Activated CD8-positive, alpha-beta T cell treated with anti-CD3 and anti-CD28 coated beads, Interleukin-2, amount 10 ng/mL, durations not matched to agents 7 days and 5 days (primary cell): ENCODE measurements at regions of chr2 and their contacts with region 1.

Region 1: GRCh38 chr2:69914170-69914960 is 544 bp upstream of the MXD1 start:
- DNase-seq: peak; percentile 100
- ATAC-seq: peak; percentile 93
- H3K4me3 Mint-ChIP-seq: peak overlapping the region; percentile 84
- H3K27ac Mint-ChIP-seq: peak overlapping the region; percentile 87
- H3K4me1 Mint-ChIP-seq: peaks cover 42% of the 10 kb centered on the region
- H3K27me3 Mint-ChIP-seq: no peaks in the 10 kb centered on the region

Region 2: GRCh38 chr2:69946351-69947077 is 32.1 kb after region 1 on chr2:
- CTCF ChIA-PET with region 1: interaction called, 5 read pairs
- POLR2A ChIA-PET with region 1: interaction called, 28 read pairs
- DNase-seq: peak; percentile 82
- ATAC-seq: peak; percentile 89
- H3K4me3 Mint-ChIP-seq: peak overlapping the region; percentile 9
- H3K27ac Mint-ChIP-seq: peak overlapping the region; percentile 87
- H3K4me1 Mint-ChIP-seq: peaks cover 30% of the 10 kb centered on the region
- H3K27me3 Mint-ChIP-seq: peaks cover 2% of the 10 kb centered on the region

Region 3: DNA sequence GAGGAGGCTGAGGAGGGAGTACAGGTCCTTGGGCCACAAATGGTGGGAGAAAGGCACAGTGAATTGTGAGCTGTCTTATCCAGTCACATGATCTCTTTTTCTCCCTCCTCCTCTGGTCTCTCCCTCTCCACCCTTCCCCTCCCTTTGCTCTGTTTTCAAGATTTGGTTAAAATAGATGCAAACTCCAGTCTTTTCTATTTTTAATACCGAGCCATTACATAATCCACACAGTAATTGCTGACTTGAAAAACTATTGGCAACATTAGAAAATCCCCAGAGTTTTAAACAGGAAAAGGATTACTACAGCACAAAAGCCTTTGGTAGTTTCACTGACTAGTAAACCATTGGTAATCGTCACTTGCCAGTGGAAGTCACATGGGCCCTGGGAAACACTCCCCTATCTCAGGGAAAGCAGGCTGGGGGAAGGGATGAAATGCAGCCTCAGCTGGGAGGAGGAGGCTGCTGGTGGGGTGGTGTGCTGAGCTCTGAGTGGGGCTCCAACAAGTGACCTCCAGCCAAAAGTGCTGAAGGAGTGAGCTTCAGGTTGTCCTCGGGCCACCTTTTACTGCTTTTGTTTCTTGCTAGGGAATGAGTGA is 115.5 kb after region 1 on chr2:
- CTCF ChIA-PET with region 1: no interaction called
- POLR2A ChIA-PET with region 1: no interaction called
- DNase-seq: no peak
- ATAC-seq: no peak
- H3K4me3 Mint-ChIP-seq: no peak overlapping the region
- H3K27ac Mint-ChIP-seq: peak overlapping the region; percentile 35
- H3K4me1 Mint-ChIP-seq: peaks cover 26% of the 10 kb centered on the region
- H3K27me3 Mint-ChIP-seq: no peaks in the 10 kb centered on the region

Region 4: DNA sequence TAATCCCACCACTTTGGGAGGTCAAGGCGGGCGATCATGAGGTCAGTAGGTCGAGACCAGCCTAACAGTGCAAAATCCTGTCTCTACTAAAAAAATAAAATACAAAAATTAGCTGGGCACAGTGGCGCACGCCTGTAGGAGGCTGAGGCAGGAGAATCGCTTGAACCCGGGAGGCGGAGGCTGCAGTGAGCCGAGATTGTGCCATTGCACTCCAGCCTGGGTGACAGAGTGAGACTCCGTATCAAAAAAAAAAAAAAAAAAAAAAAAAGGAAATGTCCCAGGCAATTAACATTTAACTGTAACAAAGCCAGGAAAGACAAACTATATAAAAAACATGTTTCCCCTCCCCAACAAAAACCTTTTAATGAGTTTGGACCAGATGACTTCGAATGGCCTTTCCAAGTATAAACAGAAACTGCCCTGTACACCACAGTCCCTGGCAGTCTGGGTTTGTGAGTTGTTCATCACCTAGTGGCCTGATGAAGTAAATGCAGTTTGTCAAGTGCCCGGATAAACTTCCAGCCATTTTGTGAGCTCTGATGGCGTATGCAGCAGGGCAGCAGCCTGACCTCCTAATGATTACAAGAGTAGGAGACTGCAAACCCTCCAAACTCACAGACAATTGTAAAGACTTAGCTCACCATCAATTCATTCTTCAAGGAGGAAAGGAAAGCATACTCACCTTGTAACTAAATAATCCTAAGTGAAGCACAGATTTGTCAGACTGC is 156.3 kb after region 1 on chr2:
- CTCF ChIA-PET with region 1: interaction called, 142 read pairs
- POLR2A ChIA-PET with region 1: interaction called, 23 read pairs
- DNase-seq: peak; percentile 81
- ATAC-seq: peak; percentile 80
- H3K4me3 Mint-ChIP-seq: peak overlapping the region; percentile 57
- H3K27ac Mint-ChIP-seq: peak overlapping the region; percentile 87
- H3K4me1 Mint-ChIP-seq: peaks cover 47% of the 10 kb centered on the region
- H3K27me3 Mint-ChIP-seq: no peaks in the 10 kb centered on the region

Region 5: DNA sequence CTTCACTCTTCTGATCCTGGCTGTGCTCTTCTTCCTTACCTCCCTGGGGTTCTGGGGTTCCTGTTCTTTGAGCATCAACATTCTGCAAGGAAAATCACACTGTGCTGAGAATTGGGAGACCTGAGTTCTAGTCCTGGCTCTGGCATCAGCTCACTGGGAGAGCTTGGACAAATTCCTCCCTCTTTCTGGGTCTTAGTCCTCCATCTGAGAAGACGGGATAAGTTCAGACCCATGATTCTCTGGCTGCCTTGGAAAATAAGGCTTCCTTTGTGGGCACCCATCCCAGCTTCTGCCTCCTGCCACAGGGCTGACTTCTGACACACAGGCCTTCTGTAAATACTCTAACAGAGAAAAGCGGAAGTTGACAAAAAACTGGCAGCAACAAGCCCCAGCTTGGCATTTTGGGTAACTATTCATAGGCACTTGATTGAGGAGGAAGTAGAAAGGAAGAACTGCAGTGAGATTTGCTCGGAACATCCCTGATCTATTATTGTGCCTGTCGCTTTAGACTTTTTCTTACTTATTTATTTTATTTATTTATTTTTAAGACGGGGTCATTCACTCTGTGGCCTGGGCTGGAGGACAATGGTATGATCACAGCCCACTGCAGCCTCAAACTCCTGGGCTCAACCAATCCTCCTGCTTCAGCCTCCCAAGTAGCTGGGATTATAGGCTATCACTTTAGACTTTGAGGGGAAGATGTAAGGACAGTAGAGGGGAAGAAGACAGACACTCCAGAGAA is 180.8 kb after region 1 on chr2:
- CTCF ChIA-PET with region 1: interaction called, 3 read pairs
- POLR2A ChIA-PET with region 1: interaction called, 11 read pairs
- DNase-seq: peak; percentile 74
- ATAC-seq: peak; percentile 72
- H3K4me3 Mint-ChIP-seq: peak overlapping the region; percentile 70
- H3K27ac Mint-ChIP-seq: peak overlapping the region; percentile 84
- H3K4me1 Mint-ChIP-seq: peaks cover 56% of the 10 kb centered on the region
- H3K27me3 Mint-ChIP-seq: no peaks in the 10 kb centered on the region

Region 6: DNA sequence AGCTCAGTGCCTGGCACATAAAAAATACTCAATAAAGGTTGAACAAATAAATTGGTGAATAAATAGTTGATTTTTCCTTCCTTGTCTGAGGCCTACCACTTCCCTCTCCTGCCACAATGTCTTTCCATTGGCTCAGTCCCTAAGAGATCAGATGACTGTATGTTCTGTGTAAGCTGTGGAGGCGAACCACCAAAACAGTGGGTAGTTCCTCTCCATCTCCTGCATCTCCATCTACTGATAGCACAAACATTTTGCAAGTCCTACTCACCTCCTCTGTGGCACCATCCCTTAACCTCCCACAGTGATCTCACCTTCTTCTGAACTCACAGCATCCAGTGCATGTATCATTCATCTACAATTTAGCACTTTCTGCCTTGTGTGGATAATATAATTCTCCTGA is 223.2 kb after region 1 on chr2:
- CTCF ChIA-PET with region 1: interaction called, 103 read pairs
- POLR2A ChIA-PET with region 1: interaction called, 44 read pairs
- DNase-seq: peak; percentile 63
- ATAC-seq: peak; percentile 7
- H3K4me3 Mint-ChIP-seq: peak overlapping the region; percentile 32
- H3K27ac Mint-ChIP-seq: peak overlapping the region; percentile 98
- H3K4me1 Mint-ChIP-seq: peaks cover 84% of the 10 kb centered on the region
- H3K27me3 Mint-ChIP-seq: no peaks in the 10 kb centered on the region

Region 7: DNA sequence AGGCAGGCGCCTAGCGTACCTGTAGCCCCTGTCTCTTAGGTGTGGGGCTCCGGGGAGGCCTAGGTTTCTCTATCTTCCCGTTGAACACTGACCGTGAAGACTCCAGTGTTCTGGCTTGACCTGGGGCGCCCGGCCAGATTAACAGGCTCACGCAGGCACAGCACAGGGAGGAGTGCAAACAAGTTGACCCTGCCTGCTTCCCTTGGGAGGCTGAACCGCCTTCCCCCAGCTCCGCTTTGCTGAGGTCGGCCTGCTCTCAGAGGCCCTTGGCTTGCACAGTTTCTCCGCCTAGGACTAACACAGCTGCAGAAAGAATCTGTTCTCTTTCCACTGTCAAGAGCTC is 344.1 kb after region 1 on chr2:
- CTCF ChIA-PET with region 1: interaction called, 15 read pairs
- POLR2A ChIA-PET with region 1: interaction called, 12 read pairs
- DNase-seq: peak; percentile 26
- ATAC-seq: no peak
- H3K4me3 Mint-ChIP-seq: peak overlapping the region; percentile 79
- H3K27ac Mint-ChIP-seq: no peak overlapping the region
- H3K4me1 Mint-ChIP-seq: peaks cover 36% of the 10 kb centered on the region
- H3K27me3 Mint-ChIP-seq: no peaks in the 10 kb centered on the region

Region 8: DNA sequence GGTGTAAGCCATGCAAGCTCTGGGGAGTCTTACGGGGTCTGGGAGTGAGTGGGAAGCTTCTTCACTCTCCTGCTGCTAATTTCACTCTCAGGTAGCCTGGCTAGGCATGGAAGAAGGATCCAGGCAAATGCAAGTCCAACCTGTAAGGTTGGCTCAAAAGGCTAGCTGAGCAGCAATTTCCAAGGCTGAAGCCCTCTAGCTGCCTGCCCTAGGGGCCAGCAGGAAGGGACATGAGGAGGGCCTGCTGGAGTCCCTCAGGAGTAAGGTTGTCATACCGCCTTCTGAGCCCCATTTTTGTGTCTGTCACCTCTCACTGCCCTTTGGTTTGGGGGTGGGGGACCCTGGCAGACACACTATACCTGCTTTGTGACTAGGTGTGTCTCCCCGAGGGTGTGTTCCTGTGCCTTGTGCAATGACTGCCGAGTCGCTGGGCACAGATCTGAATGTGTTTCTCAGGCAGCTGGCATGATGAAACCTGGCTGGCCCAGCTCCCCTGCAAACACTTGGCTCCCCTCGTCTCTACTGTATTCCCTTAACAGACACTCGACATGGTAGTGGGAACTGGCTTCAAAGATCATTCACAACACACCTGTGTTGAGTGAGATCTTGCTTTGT is 511.4 kb after region 1 on chr2:
- CTCF ChIA-PET with region 1: no interaction called
- POLR2A ChIA-PET with region 1: no interaction called
- DNase-seq: no peak
- ATAC-seq: no peak
- H3K4me3 Mint-ChIP-seq: no peak overlapping the region
- H3K27ac Mint-ChIP-seq: no peak overlapping the region
- H3K4me1 Mint-ChIP-seq: no peaks in the 10 kb centered on the region
- H3K27me3 Mint-ChIP-seq: peaks cover 4% of the 10 kb centered on the region